ENCODE measurements at regions of chr9 and their contacts with region 1.

Region 1: GRCh38 chr9:137034863-137035761 is 3.2 kb upstream of the FUT7 start:
- DNase-seq: peak; percentile 91 to 96 (median 95)
- H3K4me3 ChIP-seq: peak overlapping the region in 5 of 7 experiments; percentile 29 to 59 (median 51)
- H3K27ac ChIP-seq: peak overlapping the region in 1 of 2 experiments; percentile 58
- H3K4me1 ChIP-seq: peaks cover 0 to 56% (median 55%) of the 10 kb centered on the region in 4 experiments
- H3K27me3 ChIP-seq: no peaks in the 10 kb centered on the region

Region 2: GRCh38 chr9:136694236-136694942 is 340.7 kb before region 1 on chr9:
- CTCF ChIA-PET with region 1: no interaction called
- POLR2A ChIA-PET with region 1: no interaction called
- DNase-seq: peak in 2 of 3 donors; percentile 57 to 64
- H3K4me3 ChIP-seq: no peak overlapping the region
- H3K27ac ChIP-seq: no peak overlapping the region
- H3K4me1 ChIP-seq: peaks cover 0 to 42% (median 24%) of the 10 kb centered on the region in 4 experiments
- H3K27me3 ChIP-seq: no peaks in the 10 kb centered on the region

Region 3: DNA sequence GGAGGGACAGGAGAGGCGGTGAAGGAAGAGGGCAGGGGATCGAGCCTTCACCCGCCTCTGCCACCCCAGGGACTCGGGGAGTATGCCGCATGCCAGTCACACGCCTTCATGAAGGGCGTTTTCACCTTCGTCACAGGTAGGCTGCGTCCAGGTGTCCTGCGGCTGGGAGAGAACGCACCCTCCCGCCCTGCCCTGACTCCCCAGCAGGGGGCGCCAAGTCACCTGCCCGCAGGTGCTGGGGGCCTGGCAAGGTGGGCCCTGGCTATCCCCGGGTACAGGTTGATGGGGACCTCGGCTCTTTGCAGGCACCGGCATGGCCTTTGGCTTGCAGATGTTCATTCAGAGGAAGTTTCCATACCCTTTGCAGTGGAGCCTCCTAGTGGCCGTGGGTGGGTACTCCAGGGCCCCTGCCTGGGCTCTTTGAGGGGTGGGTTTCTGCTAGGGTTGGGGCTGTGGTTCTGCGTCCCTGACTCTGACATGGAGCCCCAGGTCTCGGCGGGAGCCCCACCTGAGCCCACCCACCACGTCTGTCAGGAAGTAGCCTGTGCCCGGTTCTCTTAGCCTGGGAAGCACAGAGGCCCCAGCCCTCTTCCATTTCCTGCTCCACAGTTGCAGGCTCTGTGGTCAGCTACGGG is 243.4 kb before region 1 on chr9:
- CTCF ChIA-PET with region 1: interaction called, 10 read pairs
- POLR2A ChIA-PET with region 1: no interaction called
- DNase-seq: peak; percentile 36 to 67 (median 65)
- H3K4me3 ChIP-seq: peak overlapping the region; percentile 45 to 91 (median 76)
- H3K27ac ChIP-seq: peak overlapping the region in 1 of 2 experiments; percentile 83
- H3K4me1 ChIP-seq: peaks cover 0 to 40% (median 24%) of the 10 kb centered on the region in 4 experiments
- H3K27me3 ChIP-seq: peaks cover 0 to 7% (median 0%) of the 10 kb centered on the region in 5 experiments

Region 4: GRCh38 chr9:136944519-136945279 is 90.4 kb before region 1 on chr9 and contains the starts of genes C8G and FBXW5:
- CTCF ChIA-PET with region 1: interaction called, 61 read pairs
- POLR2A ChIA-PET with region 1: interaction called, 4 read pairs
- DNase-seq: peak; percentile 89 to 95 (median 94)
- H3K4me3 ChIP-seq: peak within 1 kb of the TSS; percentile 64 to 91 (median 81)
- H3K27ac ChIP-seq: peak within 1 kb of the TSS; percentile 54 to 81
- H3K4me1 ChIP-seq: peaks cover 0 to 29% (median 25%) of the 10 kb centered on the region in 4 experiments
- H3K27me3 ChIP-seq: no peaks in the 10 kb centered on the region

Region 5: DNA sequence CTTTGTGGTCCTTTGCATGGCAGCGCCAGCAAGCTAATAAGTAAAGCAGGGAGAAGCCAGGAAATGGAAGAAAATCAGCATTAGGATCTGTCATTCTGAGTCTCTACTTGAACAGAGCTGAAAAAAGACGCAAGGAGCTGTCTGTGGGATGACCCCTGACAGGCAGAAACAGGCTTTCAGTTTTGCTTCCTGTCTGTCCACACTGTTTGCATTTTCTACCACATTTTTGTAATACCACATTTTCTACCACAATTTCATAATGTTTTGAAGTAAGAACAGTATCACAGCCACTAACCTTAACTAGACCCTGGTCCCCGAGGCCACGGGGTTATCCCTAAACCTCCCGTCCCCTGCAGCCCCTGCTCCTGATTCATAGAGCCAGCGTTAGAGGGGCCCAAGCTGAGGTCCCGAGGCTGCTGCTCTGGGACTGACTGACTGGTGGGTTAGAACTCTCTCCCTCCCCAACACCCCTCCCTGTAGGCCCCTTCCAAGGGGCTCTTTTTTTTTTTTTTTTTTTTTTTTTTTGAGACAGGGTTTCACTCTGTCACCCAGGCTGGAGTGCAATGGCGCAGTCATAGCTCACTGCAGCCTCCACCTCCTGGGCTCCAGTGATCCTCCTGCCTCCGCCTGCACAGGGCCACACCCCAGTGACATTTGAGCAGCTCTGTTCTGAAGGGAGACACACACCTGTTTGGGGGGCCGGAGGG is 34.8 kb before region 1 on chr9:
- CTCF ChIA-PET with region 1: interaction called, 12 read pairs
- POLR2A ChIA-PET with region 1: no interaction called
- DNase-seq: peak in 2 of 3 donors; percentile 70 to 72
- H3K4me3 ChIP-seq: no peak overlapping the region
- H3K27ac ChIP-seq: no peak overlapping the region
- H3K4me1 ChIP-seq: peaks cover 0 to 46% (median 40%) of the 10 kb centered on the region in 4 experiments
- H3K27me3 ChIP-seq: peaks cover 0 to 17% (median 0%) of the 10 kb centered on the region in 5 experiments

Region 6: DNA sequence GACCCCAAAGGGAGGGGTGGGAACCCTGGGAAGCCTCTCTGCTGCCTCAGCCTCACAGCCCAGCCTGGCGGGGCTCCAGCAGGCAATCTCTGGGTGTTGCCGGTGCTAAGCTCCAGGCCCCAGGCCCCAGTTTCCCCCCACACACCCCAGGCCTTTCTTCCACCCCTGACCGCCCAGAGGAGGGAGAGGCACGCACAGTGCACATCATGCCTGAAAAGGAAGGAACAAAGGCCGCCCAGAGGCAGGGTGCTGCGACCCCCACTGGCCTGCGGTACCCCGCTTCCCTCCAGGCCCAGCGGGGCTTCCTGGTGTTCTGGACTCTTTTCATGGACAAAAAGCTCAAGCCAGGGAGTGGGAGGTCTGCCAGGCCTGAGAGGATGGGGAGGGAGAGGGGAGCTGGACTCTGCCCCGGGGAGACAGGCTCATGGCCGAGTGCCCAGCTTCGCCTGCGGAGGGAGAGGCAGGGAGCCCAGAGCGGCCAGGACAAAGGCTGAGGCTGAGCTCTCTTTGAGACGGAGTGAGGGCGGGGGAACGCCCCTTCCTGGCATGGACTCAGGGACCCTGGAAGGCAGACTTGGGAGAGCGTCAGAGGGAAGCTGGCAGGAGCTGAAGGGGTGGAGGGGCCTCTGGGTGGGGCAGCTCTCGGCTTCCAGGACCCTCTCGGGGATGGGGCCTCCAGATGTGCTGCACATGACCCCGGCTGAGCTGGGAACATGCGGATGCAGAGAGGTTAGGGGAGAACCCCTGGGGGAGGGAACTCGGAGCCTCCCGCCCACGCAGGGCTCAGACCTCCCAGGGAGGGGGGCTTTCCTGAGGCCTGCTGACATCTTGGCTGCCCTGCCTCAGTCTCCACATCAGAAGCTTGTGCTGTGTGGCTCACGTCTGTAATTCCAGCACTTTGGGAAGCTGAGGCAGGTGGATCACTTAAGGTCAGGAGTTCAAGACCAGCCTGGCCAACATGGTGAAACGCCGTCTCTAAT is 20.6 kb after region 1 on chr9:
- CTCF ChIA-PET with region 1: interaction called, 11 read pairs
- POLR2A ChIA-PET with region 1: no interaction called
- DNase-seq: no peak
- H3K4me3 ChIP-seq: no peak overlapping the region
- H3K27ac ChIP-seq: no peak overlapping the region
- H3K4me1 ChIP-seq: peaks cover 0 to 33% (median 21%) of the 10 kb centered on the region in 4 experiments
- H3K27me3 ChIP-seq: peaks cover 0 to 55% (median 18%) of the 10 kb centered on the region in 5 experiments

Measured in common myeloid progenitor, CD34-positive (primary cell).